Aorta (tissue), 5 donors: ENCODE measurements at regions of chr16 and their contacts with region 1.

Region 1: GRCh38 chr16:24010440-24011089 is 174.8 kb downstream of the PRKCB start:
- DNase-seq: peak; percentile 81
- ATAC-seq: peak; percentile 52
- H3K4me3 ChIP-seq: no peak overlapping the region
- H3K27ac ChIP-seq: no peak overlapping the region
- H3K4me1 ChIP-seq: no peaks in the 10 kb centered on the region
- H3K27me3 ChIP-seq: no peaks in the 10 kb centered on the region

Region 2: GRCh38 chr16:23803591-23804123 is 206.9 kb before region 1 on chr16:
- intact Hi-C with region 1: loop called (anchors 2 to 10 kb)
- DNase-seq: peak in 1 of 2 donors; percentile 59
- ATAC-seq: no peak
- H3K4me3 ChIP-seq: no peak overlapping the region
- H3K27ac ChIP-seq: no peak overlapping the region
- H3K4me1 ChIP-seq: no peaks in the 10 kb centered on the region
- H3K27me3 ChIP-seq: no peaks in the 10 kb centered on the region